ENCODE measurements at regions of chr5 and their contacts with region 1.

Region 1: GRCh38 chr5:150846654-150847333 is 473 bp downstream of the IRGM start:
- DNase-seq: peak; percentile 76
- H3K4me3 Mint-ChIP-seq: peak overlapping the region; percentile 73
- H3K27ac Mint-ChIP-seq: peak overlapping the region; percentile 52
- H3K4me1 Mint-ChIP-seq: peaks cover 20% of the 10 kb centered on the region
- H3K27me3 Mint-ChIP-seq: no peaks in the 10 kb centered on the region

Region 2: GRCh38 chr5:150458819-150459557 is 387.8 kb before region 1 on chr5:
- CTCF ChIA-PET with region 1: interaction called, 8 read pairs
- POLR2A ChIA-PET with region 1: no interaction called
- intact Hi-C with region 1: loop called (anchors 2 kb)
- DNase-seq: peak; percentile 91
- H3K4me3 Mint-ChIP-seq: peak overlapping the region; percentile 53
- H3K27ac Mint-ChIP-seq: no peak overlapping the region
- H3K4me1 Mint-ChIP-seq: peaks cover 11% of the 10 kb centered on the region
- H3K27me3 Mint-ChIP-seq: no peaks in the 10 kb centered on the region

Region 3: DNA sequence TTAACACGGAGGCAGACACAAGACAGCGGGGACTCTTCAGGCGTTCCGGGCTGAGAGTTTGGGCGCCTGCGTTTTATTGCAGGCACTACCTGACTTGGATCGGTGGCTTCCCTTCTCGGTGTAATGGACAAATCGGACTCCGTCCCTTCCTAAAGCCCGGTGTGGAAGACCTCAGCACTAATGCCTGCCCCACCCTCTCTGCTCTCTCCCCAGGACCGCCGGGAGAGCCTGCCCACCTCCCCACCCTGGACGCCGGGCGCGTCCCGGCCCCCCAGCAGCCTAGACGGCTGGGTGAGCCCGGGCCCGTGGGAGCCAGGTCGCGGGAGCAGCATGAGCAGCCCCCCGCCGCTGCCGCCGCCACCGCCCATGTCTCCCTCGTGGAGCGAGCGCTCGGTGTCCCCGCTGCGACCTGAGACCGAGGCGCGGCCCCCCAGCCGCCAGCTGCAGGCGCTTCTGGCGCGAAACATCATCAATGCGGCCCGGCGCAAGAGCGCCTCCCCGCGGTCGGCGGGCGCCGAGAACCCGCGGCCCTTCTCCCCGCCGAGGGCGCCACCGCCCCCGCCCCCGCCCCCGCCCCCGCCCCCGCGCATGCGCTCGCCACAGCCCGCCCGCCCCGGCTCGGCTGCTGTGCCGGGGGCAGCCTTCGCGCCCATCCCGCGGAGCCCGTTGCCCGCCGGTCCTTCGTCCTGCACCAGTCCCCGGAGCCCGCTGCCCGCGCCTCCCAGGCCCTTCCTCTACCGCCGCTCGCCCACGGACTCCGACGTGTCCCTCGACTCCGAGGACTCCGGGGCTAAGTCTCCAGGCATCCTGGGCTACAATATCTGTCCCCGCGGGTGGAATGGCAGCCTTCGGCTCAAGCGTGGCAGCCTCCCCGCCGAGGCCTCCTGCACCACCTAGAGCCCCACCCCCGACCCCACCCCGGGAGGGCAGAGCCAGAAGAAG is 190.3 kb before region 1 on chr5:
- CTCF ChIA-PET with region 1: interaction called, 11 read pairs
- POLR2A ChIA-PET with region 1: no interaction called
- intact Hi-C with region 1: loop called (anchors 2 kb)
- DNase-seq: peak; percentile 80
- H3K4me3 Mint-ChIP-seq: peak overlapping the region; percentile 70
- H3K27ac Mint-ChIP-seq: no peak overlapping the region
- H3K4me1 Mint-ChIP-seq: peaks cover 2% of the 10 kb centered on the region
- H3K27me3 Mint-ChIP-seq: no peaks in the 10 kb centered on the region

Region 4: GRCh38 chr5:150734579-150735384 is 112.0 kb before region 1 on chr5:
- CTCF ChIA-PET with region 1: interaction called, 10 read pairs
- POLR2A ChIA-PET with region 1: no interaction called
- intact Hi-C with region 1: no loop called
- DNase-seq: peak; percentile 71
- H3K4me3 Mint-ChIP-seq: no peak overlapping the region
- H3K27ac Mint-ChIP-seq: peak overlapping the region; percentile 66
- H3K4me1 Mint-ChIP-seq: peaks cover 49% of the 10 kb centered on the region
- H3K27me3 Mint-ChIP-seq: no peaks in the 10 kb centered on the region

Region 5: DNA sequence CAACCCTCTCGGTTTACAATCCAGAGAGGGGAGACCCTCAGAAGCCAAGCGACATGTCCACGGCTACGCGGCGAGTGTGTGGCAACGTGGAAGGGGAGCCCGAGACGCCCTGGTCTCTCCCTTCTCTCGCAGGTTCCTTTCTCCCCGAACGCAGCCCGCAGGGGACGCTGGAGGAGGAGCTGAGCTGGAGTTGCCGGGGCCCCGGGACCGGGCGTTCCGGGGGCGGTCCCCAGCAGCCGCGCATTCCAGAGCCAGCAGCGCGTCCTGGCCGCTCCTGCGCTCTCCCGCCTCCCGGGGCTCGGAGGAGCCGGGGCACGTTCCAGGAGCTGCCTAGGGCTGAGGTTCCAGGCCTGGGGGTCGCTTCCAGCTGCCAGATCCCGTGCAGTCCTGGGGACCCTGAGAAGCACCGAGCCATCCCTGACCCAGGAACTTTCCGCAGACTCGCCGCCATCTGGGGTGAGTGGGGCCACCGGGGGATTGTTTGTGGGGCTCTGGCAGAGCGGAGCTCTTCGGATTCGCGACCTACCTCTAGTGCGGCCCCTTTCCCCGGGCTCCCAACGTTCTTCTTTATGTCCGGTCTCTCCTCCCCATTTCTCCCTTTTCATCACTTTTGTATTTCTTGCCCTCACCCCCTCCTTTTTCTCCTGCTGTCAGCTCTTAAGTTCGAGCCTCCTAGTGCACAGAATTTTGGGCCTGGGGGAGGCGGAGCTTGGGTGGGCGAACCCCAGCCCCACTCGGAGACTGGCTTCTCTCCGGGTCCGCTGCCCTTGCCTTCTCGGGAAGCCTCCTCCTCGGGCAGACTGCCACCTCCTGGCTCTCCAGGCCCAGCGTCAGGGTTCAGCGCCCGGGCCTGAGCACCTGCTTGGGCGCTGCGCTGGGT is 68.0 kb before region 1 on chr5 and contains the start of gene SMIM3:
- CTCF ChIA-PET with region 1: interaction called, 27 read pairs
- POLR2A ChIA-PET with region 1: interaction called, 13 read pairs
- intact Hi-C with region 1: loop called (anchors 1 kb)
- DNase-seq: peak; percentile 84
- H3K4me3 Mint-ChIP-seq: peak within 1 kb of the TSS; percentile 99
- H3K27ac Mint-ChIP-seq: peak within 1 kb of the TSS; percentile 84
- H3K4me1 Mint-ChIP-seq: peaks cover 52% of the 10 kb centered on the region
- H3K27me3 Mint-ChIP-seq: no peaks in the 10 kb centered on the region
- total RNA-seq, gene SMIM3: 22.4 to 22.8 TPM

Region 6: DNA sequence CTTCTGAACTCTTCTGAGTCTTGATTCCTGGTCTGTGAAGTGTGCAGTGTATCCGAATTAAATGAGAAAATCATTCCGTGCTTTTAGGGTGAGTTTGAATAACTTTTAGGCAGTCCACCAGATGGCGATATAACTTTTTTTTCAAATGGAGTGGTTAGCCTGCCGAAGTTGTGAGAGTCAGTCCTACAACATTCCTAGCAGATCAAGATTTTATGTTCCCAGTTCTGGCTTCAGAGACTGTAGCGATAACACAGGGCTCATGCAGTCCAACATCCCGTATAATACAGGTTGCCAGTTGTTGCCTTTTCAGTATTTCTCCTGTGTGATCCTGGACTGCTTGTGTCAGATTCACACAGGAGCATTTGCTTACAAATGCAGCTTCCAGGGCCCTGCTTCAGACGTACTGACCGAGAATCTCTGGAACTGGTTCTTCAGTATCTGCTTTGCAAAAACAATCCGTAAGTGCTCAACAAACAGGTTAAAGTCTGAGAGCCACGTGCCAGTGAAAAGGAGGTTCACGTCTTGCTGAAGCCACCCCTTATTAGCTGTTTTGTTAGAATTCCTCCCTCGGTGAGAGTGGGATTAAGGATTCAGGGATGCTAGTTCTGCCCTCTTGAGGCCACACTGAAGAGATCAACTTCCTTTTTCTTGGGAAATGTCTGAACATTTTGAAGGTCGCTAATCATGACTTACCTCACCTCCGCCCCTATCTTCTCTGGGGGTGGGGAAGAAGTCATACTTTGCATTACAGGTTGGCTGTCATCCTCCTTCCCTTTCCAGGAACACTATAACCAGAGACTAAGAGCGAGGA is 45.5 kb before region 1 on chr5:
- CTCF ChIA-PET with region 1: interaction called, 66 read pairs
- POLR2A ChIA-PET with region 1: interaction called, 4 read pairs
- intact Hi-C with region 1: loop called (anchors 1 kb)
- DNase-seq: peak; percentile 16
- H3K4me3 Mint-ChIP-seq: no peak overlapping the region
- H3K27ac Mint-ChIP-seq: no peak overlapping the region
- H3K4me1 Mint-ChIP-seq: peaks cover 13% of the 10 kb centered on the region
- H3K27me3 Mint-ChIP-seq: peaks cover 8% of the 10 kb centered on the region

Region 7: GRCh38 chr5:150895431-150896428 is 48.9 kb after region 1 on chr5:
- CTCF ChIA-PET with region 1: no interaction called
- POLR2A ChIA-PET with region 1: no interaction called
- intact Hi-C with region 1: no loop called
- DNase-seq: no peak
- H3K4me3 Mint-ChIP-seq: no peak overlapping the region
- H3K27ac Mint-ChIP-seq: no peak overlapping the region
- H3K4me1 Mint-ChIP-seq: no peaks in the 10 kb centered on the region
- H3K27me3 Mint-ChIP-seq: no peaks in the 10 kb centered on the region